Naive thymus-derived CD4-positive, alpha-beta T cell (primary cell): ENCODE measurements at regions of chr18 and their contacts with region 1.

Region 1: GRCh38 chr18:58493516-58494253 is 135.2 kb downstream of the ALPK2 start:
- DNase-seq: peak; percentile 37 to 72 (median 64)
- ATAC-seq: peak; percentile 93
- H3K4me3 ChIP-seq: no peak overlapping the region
- H3K4me3 Mint-ChIP-seq: peak overlapping the region in 4 of 10 donors; percentile 22 to 56 (median 28)
- H3K27ac ChIP-seq: no peak overlapping the region
- H3K27ac Mint-ChIP-seq: peak overlapping the region in 2 of 9 donors; percentile 0 to 47
- H3K4me1 ChIP-seq: no peaks in the 10 kb centered on the region
- H3K4me1 Mint-ChIP-seq: peaks cover 5 to 11% (median 7%) of the 10 kb centered on the region in 7 donors
- H3K27me3 ChIP-seq: no peaks in the 10 kb centered on the region
- H3K27me3 Mint-ChIP-seq: peaks cover 19 to 45% (median 29%) of the 10 kb centered on the region in 5 donors

Region 2: DNA sequence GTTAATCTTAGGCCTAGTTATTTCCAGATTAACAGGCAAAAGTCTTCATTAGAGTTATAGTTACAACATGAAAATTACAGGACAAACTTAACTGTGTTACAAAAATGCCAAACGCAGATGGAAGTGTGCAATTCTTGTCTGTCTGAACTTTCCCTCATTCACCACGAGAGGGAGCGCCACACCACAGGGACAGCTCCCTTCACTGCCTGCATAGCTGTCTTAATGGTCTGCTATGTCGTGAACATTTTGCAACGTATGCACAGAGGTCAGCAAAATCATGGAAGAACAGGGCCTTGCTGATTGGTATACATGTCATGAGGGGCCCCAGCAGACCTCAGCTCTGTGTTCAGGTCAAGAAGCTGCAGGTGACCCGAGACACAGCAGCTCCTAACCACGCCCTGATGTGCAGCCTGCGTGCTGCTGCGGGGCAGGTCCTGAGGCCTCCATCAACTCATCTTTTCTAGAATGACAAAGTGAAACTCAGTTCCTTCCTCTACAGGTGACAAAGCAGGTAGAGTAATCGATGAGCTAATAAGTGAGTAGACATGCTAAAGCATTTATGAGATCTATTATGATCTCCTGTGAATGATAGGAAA is 611.8 kb before region 1 on chr18:
- CTCF ChIA-PET with region 1: interaction called, 3 read pairs
- POLR2A ChIA-PET with region 1: no interaction called
- intact Hi-C with region 1: loop called in 1 of 2 experiments (anchors 5 kb)
- DNase-seq: peak; percentile 2 to 48 (median 33)
- ATAC-seq: peak; percentile 79
- H3K4me3 ChIP-seq: no peak overlapping the region
- H3K4me3 Mint-ChIP-seq: no peak overlapping the region
- H3K27ac ChIP-seq: no peak overlapping the region
- H3K27ac Mint-ChIP-seq: no peak overlapping the region
- H3K4me1 ChIP-seq: no peaks in the 10 kb centered on the region
- H3K4me1 Mint-ChIP-seq: no peaks in the 10 kb centered on the region
- H3K27me3 ChIP-seq: no peaks in the 10 kb centered on the region
- H3K27me3 Mint-ChIP-seq: peaks cover 2 to 24% (median 20%) of the 10 kb centered on the region in 5 donors

Region 3: DNA sequence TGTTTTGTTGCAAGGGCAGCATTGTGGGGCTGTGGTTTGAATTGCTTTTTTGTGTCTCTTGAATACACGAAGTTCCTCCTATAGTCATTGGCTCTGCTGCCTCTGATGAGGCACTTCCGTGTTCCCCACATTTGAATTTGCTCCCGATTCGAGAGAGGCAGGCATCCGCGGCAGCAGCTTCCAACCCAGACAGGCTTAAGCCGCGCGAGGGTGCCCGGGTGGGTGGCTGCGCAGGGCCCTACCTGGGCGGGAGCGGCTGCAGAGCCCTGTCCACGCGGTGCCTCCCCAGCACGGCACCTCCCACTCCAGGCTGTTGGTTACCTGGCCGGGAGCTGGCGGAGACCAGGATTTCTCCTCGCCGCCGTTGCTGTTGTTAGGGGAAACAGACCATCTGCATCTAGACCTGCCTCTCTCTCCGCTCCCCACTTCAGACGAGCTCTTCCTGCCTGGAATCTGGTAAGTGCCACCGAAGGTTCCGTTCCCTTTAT is 298.4 kb before region 1 on chr18:
- CTCF ChIA-PET with region 1: no interaction called
- POLR2A ChIA-PET with region 1: no interaction called
- intact Hi-C with region 1: loop called in 1 of 2 experiments (anchors 5 kb)
- DNase-seq: peak in 8 of 9 donors; percentile 12 to 43 (median 24)
- ATAC-seq: peak; percentile 61
- H3K4me3 ChIP-seq: peak overlapping the region; percentile 56
- H3K4me3 Mint-ChIP-seq: peak overlapping the region; percentile 75 to 91 (median 86)
- H3K27ac ChIP-seq: peak overlapping the region; percentile 9
- H3K27ac Mint-ChIP-seq: peak overlapping the region in 7 of 9 donors; percentile 0 to 81 (median 65)
- H3K4me1 ChIP-seq: peaks cover 0 to 5% of the 10 kb centered on the region in 2 donors
- H3K4me1 Mint-ChIP-seq: peaks cover 7 to 26% (median 26%) of the 10 kb centered on the region in 7 donors
- H3K27me3 ChIP-seq: no peaks in the 10 kb centered on the region
- H3K27me3 Mint-ChIP-seq: peaks cover 0 to 28% (median 6%) of the 10 kb centered on the region in 5 donors

Region 4: DNA sequence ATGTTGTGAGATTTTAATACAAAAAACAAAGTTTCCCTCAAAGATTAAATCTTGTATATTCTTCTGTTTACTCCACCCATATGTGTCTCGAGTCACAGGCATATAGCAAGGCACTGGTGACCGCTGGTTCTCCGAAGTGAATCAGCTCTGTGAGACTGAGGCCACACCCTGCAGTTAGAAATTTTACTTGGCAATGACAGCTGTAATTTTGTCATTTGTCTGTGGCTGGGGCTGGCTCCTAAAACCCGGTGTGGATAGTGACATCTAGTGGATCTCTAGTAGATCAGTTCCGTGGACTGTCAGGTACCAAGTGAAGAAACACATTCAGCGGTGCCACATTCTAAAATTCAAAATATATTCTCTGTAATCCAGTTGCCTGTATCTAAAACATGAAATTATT is 171.7 kb before region 1 on chr18:
- CTCF ChIA-PET with region 1: no interaction called
- POLR2A ChIA-PET with region 1: no interaction called
- intact Hi-C with region 1: loop called in 1 of 2 experiments (anchors 5 kb)
- DNase-seq: peak in 8 of 9 donors; percentile 32 to 71 (median 64)
- ATAC-seq: peak; percentile 90
- H3K4me3 ChIP-seq: no peak overlapping the region
- H3K4me3 Mint-ChIP-seq: peak overlapping the region in 9 of 10 donors; percentile 31 to 75 (median 57)
- H3K27ac ChIP-seq: no peak overlapping the region
- H3K27ac Mint-ChIP-seq: peak overlapping the region in 8 of 9 donors; percentile 7 to 75 (median 58)
- H3K4me1 ChIP-seq: peaks cover 0 to 13% of the 10 kb centered on the region in 2 donors
- H3K4me1 Mint-ChIP-seq: peaks cover 7 to 25% (median 22%) of the 10 kb centered on the region in 7 donors
- H3K27me3 ChIP-seq: no peaks in the 10 kb centered on the region
- H3K27me3 Mint-ChIP-seq: peaks cover 0 to 12% (median 0%) of the 10 kb centered on the region in 5 donors

Region 5: GRCh38 chr18:58407263-58407648 is 86.4 kb before region 1 on chr18:
- CTCF ChIA-PET with region 1: interaction called, 10 read pairs
- POLR2A ChIA-PET with region 1: no interaction called
- intact Hi-C with region 1: no loop called
- DNase-seq: no peak
- ATAC-seq: no peak
- H3K4me3 ChIP-seq: no peak overlapping the region
- H3K4me3 Mint-ChIP-seq: no peak overlapping the region
- H3K27ac ChIP-seq: no peak overlapping the region
- H3K27ac Mint-ChIP-seq: no peak overlapping the region
- H3K4me1 ChIP-seq: no peaks in the 10 kb centered on the region
- H3K4me1 Mint-ChIP-seq: peaks cover 0 to 5% (median 2%) of the 10 kb centered on the region in 7 donors
- H3K27me3 ChIP-seq: no peaks in the 10 kb centered on the region
- H3K27me3 Mint-ChIP-seq: peaks cover 0 to 6% (median 0%) of the 10 kb centered on the region in 5 donors

Region 6: DNA sequence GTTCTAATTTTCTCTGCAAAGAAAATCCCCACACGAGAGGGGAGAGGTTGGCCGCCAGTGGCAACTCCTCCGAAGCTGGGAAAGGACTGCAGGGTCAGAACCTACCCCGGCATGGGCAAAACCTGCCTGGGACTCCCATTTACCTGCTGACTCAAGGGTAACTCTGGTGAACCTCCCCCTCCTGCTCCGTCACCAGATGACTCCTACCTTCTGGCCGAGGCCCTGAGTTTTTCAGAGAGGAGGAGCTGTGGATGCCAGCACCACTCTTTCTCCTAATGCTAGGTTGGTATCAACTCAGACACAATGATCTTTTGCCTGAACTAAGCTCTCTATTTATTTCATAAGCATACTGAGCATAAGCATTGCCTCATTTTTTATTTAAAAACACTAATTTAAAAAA is 38.6 kb after region 1 on chr18:
- CTCF ChIA-PET with region 1: no interaction called
- POLR2A ChIA-PET with region 1: no interaction called
- intact Hi-C with region 1: no loop called
- DNase-seq: no peak
- ATAC-seq: no peak
- H3K4me3 ChIP-seq: no peak overlapping the region
- H3K4me3 Mint-ChIP-seq: no peak overlapping the region
- H3K27ac ChIP-seq: no peak overlapping the region
- H3K27ac Mint-ChIP-seq: no peak overlapping the region
- H3K4me1 ChIP-seq: no peaks in the 10 kb centered on the region
- H3K4me1 Mint-ChIP-seq: peaks cover 0 to 26% (median 6%) of the 10 kb centered on the region in 7 donors
- H3K27me3 ChIP-seq: no peaks in the 10 kb centered on the region
- H3K27me3 Mint-ChIP-seq: peaks cover 0 to 38% (median 0%) of the 10 kb centered on the region in 5 donors

Region 7: DNA sequence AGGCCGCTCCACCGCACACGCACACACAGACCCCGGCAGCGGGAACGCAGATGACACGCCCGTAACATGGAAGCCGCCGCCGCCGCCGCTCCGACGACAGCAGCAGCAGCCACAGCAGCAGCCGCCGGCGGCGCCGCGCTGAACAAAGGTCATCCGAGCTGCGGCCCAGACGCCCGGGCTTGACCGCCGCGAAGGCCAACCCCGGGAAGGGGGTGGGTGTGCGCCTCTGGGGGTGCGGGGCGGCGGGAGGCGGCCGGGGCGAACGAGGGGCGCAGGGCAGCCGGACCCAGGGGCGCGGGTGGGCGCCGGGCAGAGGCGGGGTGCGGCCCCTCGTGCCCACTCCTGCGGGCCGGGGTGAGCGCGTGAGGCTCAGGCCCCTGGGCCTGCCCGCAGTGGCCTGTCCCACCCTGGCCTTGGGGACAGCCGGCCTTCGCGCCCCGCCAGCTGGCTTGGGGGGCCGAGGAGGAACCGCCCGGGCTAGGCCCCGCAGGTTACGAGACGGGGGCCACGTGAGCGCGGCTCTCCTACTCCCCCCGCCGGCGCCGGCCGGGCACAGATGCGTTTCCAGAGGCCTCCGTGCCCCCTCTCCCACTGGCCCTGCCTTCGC is 370.0 kb after region 1 on chr18:
- CTCF ChIA-PET with region 1: no interaction called
- POLR2A ChIA-PET with region 1: no interaction called
- intact Hi-C with region 1: no loop called
- DNase-seq: peak in 8 of 9 donors; percentile 11 to 39 (median 24)
- ATAC-seq: peak; percentile 73
- H3K4me3 ChIP-seq: no peak overlapping the region
- H3K4me3 Mint-ChIP-seq: peak overlapping the region in 8 of 10 donors; percentile 16 to 78 (median 51)
- H3K27ac ChIP-seq: no peak overlapping the region
- H3K27ac Mint-ChIP-seq: peak overlapping the region in 1 of 9 donors; percentile 86
- H3K4me1 ChIP-seq: peaks cover 6 to 8% of the 10 kb centered on the region in 2 donors
- H3K4me1 Mint-ChIP-seq: peaks cover 4 to 22% (median 13%) of the 10 kb centered on the region in 7 donors
- H3K27me3 ChIP-seq: peaks cover 0 to 4% of the 10 kb centered on the region in 2 donors
- H3K27me3 Mint-ChIP-seq: peaks cover 51 to 87% (median 66%) of the 10 kb centered on the region in 5 donors